Sigmoid colon (tissue), 7 donors: ENCODE measurements at regions of chr14 and their contacts with region 1.

Region 1: GRCh38 chr14:67837011-67837624 is 17.5 kb downstream of the RAD51B start:
- DNase-seq: peak; percentile 71
- H3K4me3 ChIP-seq: no peak overlapping the region
- H3K27ac ChIP-seq: peak overlapping the region in 1 of 4 donors; percentile 29
- H3K4me1 ChIP-seq: no peaks in the 10 kb centered on the region
- H3K27me3 ChIP-seq: no peaks in the 10 kb centered on the region
- CTCF ChIP-seq: peak; percentile 35 to 75 (median 53)
- EP300 ChIP-seq: no peak
- POLR2A ChIP-seq: no peak

Region 2: GRCh38 chr14:67816326-67817002 is 20.7 kb before region 1 on chr14 and contains the start of gene ZFYVE26:
- intact Hi-C with region 1: no loop called
- DNase-seq: peak; percentile 97
- H3K4me3 ChIP-seq: peak within 1 kb of the TSS; percentile 71 to 87 (median 74)
- H3K27ac ChIP-seq: peak within 1 kb of the TSS; percentile 80 to 84 (median 82)
- H3K4me1 ChIP-seq: peaks cover 0 to 31% (median 26%) of the 10 kb centered on the region in 4 donors
- H3K27me3 ChIP-seq: no peaks in the 10 kb centered on the region
- CTCF ChIP-seq: no peak
- EP300 ChIP-seq: no peak
- POLR2A ChIP-seq: no peak
- total RNA-seq, gene ZFYVE26: 16.6 to 48.7 (median 22.1) TPM

Region 3: GRCh38 chr14:67863234-67863633 is 26.1 kb after region 1 on chr14:
- intact Hi-C with region 1: no loop called
- DNase-seq: no peak
- H3K4me3 ChIP-seq: no peak overlapping the region
- H3K27ac ChIP-seq: no peak overlapping the region
- H3K4me1 ChIP-seq: no peaks in the 10 kb centered on the region
- H3K27me3 ChIP-seq: no peaks in the 10 kb centered on the region
- CTCF ChIP-seq: no peak
- EP300 ChIP-seq: no peak
- POLR2A ChIP-seq: no peak

Region 4: GRCh38 chr14:67934008-67934481 is 96.9 kb after region 1 on chr14:
- intact Hi-C with region 1: loop called (anchors 5 kb)
- DNase-seq: no peak
- H3K4me3 ChIP-seq: no peak overlapping the region
- H3K27ac ChIP-seq: peak overlapping the region; percentile 44 to 79 (median 66)
- H3K4me1 ChIP-seq: peaks cover 0 to 32% (median 17%) of the 10 kb centered on the region in 4 donors
- H3K27me3 ChIP-seq: no peaks in the 10 kb centered on the region
- CTCF ChIP-seq: peak; percentile 71 to 90 (median 86)
- EP300 ChIP-seq: no peak
- POLR2A ChIP-seq: no peak

Region 5: DNA sequence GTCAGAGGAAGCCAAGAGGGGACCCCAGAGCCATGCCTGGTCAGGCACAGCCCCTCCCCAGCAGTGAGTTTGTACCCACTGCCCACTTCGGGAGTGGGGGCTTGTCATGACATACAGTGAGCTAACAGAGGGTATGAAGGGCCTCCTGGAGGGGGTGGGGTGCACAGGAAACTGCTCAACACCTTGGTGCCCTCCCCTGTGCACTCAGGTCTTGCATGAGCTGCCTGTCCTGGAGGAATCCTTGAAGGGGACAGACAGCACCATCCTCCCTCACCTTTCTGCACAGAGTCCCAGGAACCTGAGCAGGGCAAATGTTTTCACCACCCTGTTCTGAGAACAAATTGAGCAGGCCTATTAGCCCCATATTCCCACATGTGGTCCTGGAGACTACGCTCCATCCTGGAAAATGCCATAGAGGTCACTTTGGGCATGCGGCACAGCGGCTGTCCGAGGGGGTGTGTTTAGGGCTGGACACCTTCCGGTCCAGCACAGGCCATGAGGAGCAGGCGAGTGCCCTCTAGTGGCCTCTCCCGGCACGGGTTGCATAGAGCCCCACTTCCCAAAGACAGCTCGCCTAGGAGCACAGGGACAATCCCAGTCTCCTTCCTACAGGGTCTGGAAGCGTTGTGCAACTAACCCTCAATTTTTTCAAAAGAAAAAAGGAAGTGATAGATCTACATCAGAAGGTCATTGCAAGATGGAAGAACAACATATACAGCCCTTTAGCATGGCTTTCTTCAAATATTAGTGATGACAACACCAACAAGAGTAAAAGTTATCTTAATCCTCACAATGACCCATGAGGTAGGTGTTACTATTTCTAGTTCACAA is 987.6 kb after region 1 on chr14:
- intact Hi-C with region 1: loop called (anchors 5 kb)
- DNase-seq: peak; percentile 91
- H3K4me3 ChIP-seq: no peak overlapping the region
- H3K27ac ChIP-seq: no peak overlapping the region
- H3K4me1 ChIP-seq: peaks cover 0 to 15% (median 4%) of the 10 kb centered on the region in 4 donors
- H3K27me3 ChIP-seq: no peaks in the 10 kb centered on the region
- CTCF ChIP-seq: peak; percentile 54 to 74 (median 72)
- EP300 ChIP-seq: no peak
- POLR2A ChIP-seq: no peak

Region 6: DNA sequence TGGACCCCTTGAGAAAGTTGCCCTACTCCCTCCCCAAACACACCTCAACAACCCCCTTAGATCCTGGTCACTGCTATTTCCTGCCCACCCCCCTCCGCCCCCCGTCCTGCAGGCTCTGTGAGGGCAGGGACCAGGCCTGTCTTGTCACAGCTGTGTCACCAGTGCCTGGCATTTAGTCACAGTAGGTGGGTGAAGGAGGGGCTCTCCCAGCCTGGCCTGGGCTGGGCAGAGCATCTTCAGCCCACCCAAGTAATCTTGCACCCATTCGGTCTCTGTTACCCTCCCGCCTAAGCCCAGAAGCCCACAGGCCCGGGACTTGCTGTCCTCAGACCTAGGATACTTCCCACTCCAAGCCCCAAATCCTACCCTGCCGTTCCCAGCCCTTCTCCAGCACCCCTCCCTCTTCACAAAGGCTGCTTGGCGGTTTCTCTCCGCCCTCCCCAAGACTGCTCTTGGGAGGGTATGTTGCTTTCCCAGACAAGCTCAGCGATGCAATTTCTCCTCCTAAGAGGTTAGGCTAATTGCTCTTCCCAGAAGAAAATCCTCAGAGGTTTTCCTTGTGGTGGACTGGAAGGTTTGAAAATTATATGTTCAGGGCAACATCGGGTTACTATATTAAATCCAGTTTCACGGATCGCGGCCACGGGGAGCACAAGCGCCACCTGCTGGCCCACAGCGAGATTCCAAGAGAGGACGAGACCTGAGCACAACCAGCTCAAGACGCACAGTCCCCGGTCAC is 1006.5 kb after region 1 on chr14:
- intact Hi-C with region 1: loop called (anchors 5 kb)
- DNase-seq: peak; percentile 93
- H3K4me3 ChIP-seq: peak overlapping the region in 3 of 4 donors; percentile 31 to 37 (median 31)
- H3K27ac ChIP-seq: peak overlapping the region in 3 of 4 donors; percentile 80 to 82 (median 82)
- H3K4me1 ChIP-seq: peaks cover 0 to 41% (median 35%) of the 10 kb centered on the region in 4 donors
- H3K27me3 ChIP-seq: no peaks in the 10 kb centered on the region
- CTCF ChIP-seq: peak; percentile 64 to 94 (median 80)
- EP300 ChIP-seq: no peak
- POLR2A ChIP-seq: no peak

Region 7: GRCh38 chr14:69117020-69117767 is 1280.1 kb after region 1 on chr14:
- intact Hi-C with region 1: loop called (anchors 10 kb)
- DNase-seq: no peak
- H3K4me3 ChIP-seq: no peak overlapping the region
- H3K27ac ChIP-seq: no peak overlapping the region
- H3K4me1 ChIP-seq: no peaks in the 10 kb centered on the region
- H3K27me3 ChIP-seq: no peaks in the 10 kb centered on the region
- CTCF ChIP-seq: no peak
- EP300 ChIP-seq: no peak
- POLR2A ChIP-seq: no peak